ENCODE measurements at regions of chr15 and their contacts with region 1.

Region 1: GRCh38 chr15:67456677-67457529 is 64.0 kb upstream of the C15orf61 start:
- DNase-seq: peak; percentile 77
- CTCF ChIP-seq: peak; percentile 75

Region 2: DNA sequence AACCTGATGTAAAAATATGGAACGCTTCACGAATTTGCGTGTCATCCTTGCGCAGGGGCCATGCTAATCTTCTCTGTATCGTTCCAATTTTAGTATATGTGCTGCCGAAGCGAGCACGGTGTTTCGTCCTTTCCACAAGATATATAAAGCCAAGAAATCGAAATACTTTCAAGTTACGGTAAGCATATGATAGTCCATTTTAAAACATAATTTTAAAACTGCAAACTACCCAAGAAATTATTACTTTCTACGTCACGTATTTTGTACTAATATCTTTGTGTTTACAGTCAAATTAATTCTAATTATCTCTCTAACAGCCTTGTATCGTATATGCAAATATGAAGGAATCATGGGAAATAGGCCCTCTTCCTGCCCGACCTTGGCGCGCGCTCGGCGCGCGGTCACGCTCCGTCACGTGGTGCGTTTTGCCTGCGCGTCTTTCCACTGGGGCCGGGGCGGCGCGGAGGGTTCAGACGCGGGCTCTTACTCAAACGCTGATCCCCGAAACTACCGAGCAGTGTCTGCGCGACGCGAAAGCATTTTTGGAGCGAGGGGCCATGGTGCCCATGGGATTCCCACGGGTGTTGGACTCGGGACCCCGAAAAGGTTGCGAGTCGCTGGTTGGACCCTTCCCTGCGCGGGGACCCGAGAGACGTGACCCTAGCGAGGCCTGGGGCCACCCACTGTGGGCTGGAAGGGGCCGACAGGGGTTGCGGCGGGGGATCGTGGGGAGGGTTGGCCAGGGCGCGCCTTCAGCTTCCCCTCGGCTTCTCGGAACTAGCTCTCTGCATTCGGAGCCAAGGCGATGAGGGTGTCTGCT is 383.2 kb after region 1 on chr15 and contains the start of gene RNU6-1:
- in situ Hi-C with region 1: loop called (anchors 10 kb)
- DNase-seq: peak; percentile 94
- CTCF ChIP-seq: no peak

Measured in GM13976 (cell line).